GM10248 (cell line): ENCODE measurements at regions of chr10 and their contacts with region 1.

Region 1: GRCh38 chr10:98309366-98310355 is 41.7 kb upstream of the LOXL4 start:
- DNase-seq: peak; percentile 66
- CTCF ChIP-seq: peak; percentile 73

Region 2: GRCh38 chr10:98295907-98296306 is 13.8 kb before region 1 on chr10:
- CTCF ChIA-PET with region 1: interaction called, 15 read pairs
- POLR2A ChIA-PET with region 1: no interaction called
- DNase-seq: no peak
- CTCF ChIP-seq: no peak

Region 3: GRCh38 chr10:98323221-98324164 is 13.8 kb after region 1 on chr10:
- CTCF ChIA-PET with region 1: interaction called, 14 read pairs
- POLR2A ChIA-PET with region 1: no interaction called
- DNase-seq: no peak
- CTCF ChIP-seq: no peak